Transverse colon (tissue), 4 donors: ENCODE measurements at regions of chr14 and their contacts with region 1.

Region 1: DNA sequence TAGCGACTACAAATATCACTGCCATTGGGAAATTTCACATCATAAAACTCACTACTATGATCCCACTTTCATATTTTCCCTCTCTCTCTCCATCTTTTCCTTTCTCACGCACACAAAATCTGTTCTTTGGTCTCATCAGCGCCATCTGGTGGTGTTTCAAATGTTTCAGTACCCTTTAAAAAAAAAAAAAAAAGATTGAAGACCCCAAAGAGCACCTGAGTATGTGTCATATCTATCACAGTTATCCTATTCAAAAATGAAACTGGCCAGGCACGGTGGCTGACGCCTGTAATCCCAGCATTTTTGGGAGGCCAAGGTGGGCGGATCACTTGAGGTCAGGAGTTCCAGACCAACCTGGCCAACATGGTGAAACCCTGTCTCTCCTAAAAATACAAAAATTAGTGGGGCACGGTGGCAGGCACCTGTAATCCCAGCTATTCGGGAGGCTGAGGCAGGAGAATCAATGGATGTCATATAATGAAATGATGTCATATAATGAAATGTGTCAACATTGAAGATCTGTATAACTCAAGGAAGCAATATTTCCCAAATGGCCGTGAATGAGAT is 72.4 kb downstream of the TTC9 start:
- DNase-seq: peak; percentile 14
- H3K4me3 ChIP-seq: no peak overlapping the region
- H3K27ac ChIP-seq: no peak overlapping the region
- H3K4me1 ChIP-seq: peaks cover 0 to 5% (median 0%) of the 10 kb centered on the region in 4 donors
- H3K27me3 ChIP-seq: no peaks in the 10 kb centered on the region
- CTCF ChIP-seq: peak; percentile 58 to 70 (median 67)
- EP300 ChIP-seq: no peak
- POLR2A ChIP-seq: no peak

Region 2: DNA sequence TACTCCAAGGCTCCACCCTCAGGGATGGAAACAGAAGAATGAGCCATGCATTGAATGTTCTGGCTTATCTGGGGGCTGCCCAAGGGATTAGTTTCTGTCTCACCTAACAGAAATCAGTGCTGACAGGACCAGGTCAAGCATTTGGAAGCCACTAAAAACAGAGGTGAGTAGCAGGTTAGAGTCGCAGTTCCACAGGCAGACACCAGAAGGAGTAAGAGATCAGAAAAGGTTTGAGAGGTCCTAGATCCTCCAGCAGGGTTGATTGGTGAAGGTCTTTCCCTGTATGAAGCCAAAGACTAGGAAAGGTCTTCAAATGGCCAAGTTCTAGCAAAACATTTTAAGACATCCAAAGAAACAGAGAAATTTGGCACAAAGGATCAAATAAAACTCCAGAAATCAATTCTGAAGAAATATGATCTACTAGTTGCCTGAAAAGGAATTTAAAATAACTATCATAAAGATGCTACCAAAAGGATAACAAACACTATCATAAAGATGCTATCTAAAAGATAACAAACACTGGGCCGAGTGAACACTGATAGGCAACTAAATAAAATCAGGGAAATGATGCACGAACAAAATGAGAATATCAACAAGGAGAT is 91.9 kb before region 1 on chr14:
- in situ Hi-C with region 1: loop called in 3 of 4 experiments (anchors 5 to 10 kb)
- intact Hi-C with region 1: no loop called
- DNase-seq: peak; percentile 52
- H3K4me3 ChIP-seq: no peak overlapping the region
- H3K27ac ChIP-seq: no peak overlapping the region
- H3K4me1 ChIP-seq: no peaks in the 10 kb centered on the region
- H3K27me3 ChIP-seq: no peaks in the 10 kb centered on the region
- CTCF ChIP-seq: peak; percentile 31 to 70 (median 62)
- EP300 ChIP-seq: no peak
- POLR2A ChIP-seq: no peak

Region 3: DNA sequence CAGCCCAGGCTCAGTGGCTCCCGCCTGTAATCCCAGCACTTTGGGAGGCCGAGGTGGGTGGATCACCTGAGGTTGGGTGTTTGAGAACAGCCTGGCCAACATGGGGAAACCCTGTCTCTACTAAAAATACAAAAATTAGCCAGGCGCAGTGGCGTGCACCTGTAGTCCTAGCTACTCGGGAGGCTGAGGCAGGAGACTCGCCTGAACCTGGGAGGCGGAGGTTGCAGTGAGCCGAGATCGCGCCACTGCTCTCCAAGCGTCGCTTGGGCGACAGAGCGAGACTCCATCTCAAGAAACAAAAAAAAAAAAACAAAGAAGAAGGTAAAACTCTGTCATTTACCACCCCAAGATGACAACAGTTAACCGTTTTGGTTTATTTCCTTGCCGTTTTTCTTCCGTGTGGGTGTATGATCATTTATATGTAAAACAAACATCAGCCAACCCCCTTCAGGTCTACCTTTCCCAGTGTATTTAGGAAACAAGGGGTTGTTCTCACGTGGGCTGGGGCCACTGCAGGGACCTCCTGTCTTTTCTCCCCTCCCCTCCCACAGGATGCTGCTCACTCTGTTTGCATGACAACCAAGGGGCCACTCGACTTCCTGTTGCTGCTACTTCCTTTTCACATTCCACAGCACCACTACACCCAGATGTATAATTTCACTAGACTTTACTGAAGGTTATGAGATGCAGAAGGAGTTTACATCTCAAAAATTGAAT is 58.9 kb before region 1 on chr14:
- in situ Hi-C with region 1: no loop called
- intact Hi-C with region 1: no loop called
- DNase-seq: peak; percentile 68
- H3K4me3 ChIP-seq: no peak overlapping the region
- H3K27ac ChIP-seq: peak overlapping the region; percentile 2 to 60 (median 54)
- H3K4me1 ChIP-seq: peaks cover 0 to 6% (median 0%) of the 10 kb centered on the region in 4 donors
- H3K27me3 ChIP-seq: no peaks in the 10 kb centered on the region
- CTCF ChIP-seq: no peak
- EP300 ChIP-seq: no peak
- POLR2A ChIP-seq: no peak